Natural killer cell (primary cell): ENCODE measurements at regions of chr19 and their contacts with region 1.

Region 1: DNA sequence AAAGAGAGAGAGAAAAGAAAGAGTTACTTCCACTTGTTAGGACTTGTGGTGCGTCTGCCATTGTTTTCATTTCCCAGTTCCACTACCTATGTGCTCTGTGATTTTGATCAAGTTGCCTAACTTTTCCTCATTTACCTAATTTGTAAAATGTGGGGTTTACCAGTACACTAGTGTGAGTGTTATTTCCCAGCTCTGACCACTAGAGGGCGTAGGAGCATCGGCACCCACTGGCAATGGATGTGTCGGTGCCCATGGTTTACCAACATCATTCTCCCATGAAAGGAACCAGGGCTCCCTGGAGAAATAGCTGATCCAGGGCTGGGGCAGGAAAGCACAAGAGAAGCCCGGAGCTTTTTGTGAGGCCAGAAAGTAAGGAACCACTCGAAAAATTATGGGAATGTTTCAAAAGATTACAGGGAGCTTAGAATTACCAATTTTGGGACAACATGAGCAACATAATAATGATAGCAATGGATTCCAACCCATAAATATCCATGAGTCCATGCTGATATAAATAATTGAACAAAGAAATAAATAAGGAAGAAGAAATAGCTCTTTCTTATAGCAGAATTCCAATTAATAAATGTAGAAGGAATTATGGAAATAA is 15.1 kb upstream of the CEACAM4 start:
- DNase-seq: peak; percentile 54 to 87
- ATAC-seq: peak; percentile 85 to 91 (median 87)
- H3K4me3 ChIP-seq: no peak overlapping the region
- H3K4me3 Mint-ChIP-seq: no peak overlapping the region
- H3K27ac ChIP-seq: no peak overlapping the region
- H3K27ac Mint-ChIP-seq: no peak overlapping the region
- H3K4me1 ChIP-seq: no peaks in the 10 kb centered on the region
- H3K4me1 Mint-ChIP-seq: no peaks in the 10 kb centered on the region
- H3K27me3 ChIP-seq: no peaks in the 10 kb centered on the region
- H3K27me3 Mint-ChIP-seq: peaks cover 14 to 24% of the 10 kb centered on the region in 2 donors
- CTCF ChIP-seq: peak; percentile 96

Region 2: GRCh38 chr19:41691268-41691970 is 49.4 kb after region 1 on chr19:
- intact Hi-C with region 1: loop called (anchors 2 kb)
- DNase-seq: peak in 1 of 2 donors; percentile 61
- ATAC-seq: peak in 2 of 3 donors; percentile 57 to 63
- H3K4me3 ChIP-seq: no peak overlapping the region
- H3K4me3 Mint-ChIP-seq: no peak overlapping the region
- H3K27ac ChIP-seq: no peak overlapping the region
- H3K27ac Mint-ChIP-seq: no peak overlapping the region
- H3K4me1 ChIP-seq: no peaks in the 10 kb centered on the region
- H3K4me1 Mint-ChIP-seq: peaks cover 0 to 7% of the 10 kb centered on the region in 2 donors
- H3K27me3 ChIP-seq: no peaks in the 10 kb centered on the region
- H3K27me3 Mint-ChIP-seq: peaks cover 15 to 26% of the 10 kb centered on the region in 2 donors
- CTCF ChIP-seq: peak; percentile 62

Region 3: GRCh38 chr19:41734617-41735016 is 92.6 kb after region 1 on chr19:
- intact Hi-C with region 1: no loop called
- DNase-seq: no peak
- ATAC-seq: no peak
- H3K4me3 ChIP-seq: no peak overlapping the region
- H3K4me3 Mint-ChIP-seq: no peak overlapping the region
- H3K27ac ChIP-seq: no peak overlapping the region
- H3K27ac Mint-ChIP-seq: no peak overlapping the region
- H3K4me1 ChIP-seq: no peaks in the 10 kb centered on the region
- H3K4me1 Mint-ChIP-seq: no peaks in the 10 kb centered on the region
- H3K27me3 ChIP-seq: peaks cover 3% of the 10 kb centered on the region
- H3K27me3 Mint-ChIP-seq: peaks cover 25 to 36% of the 10 kb centered on the region in 2 donors
- CTCF ChIP-seq: no peak

Region 4: DNA sequence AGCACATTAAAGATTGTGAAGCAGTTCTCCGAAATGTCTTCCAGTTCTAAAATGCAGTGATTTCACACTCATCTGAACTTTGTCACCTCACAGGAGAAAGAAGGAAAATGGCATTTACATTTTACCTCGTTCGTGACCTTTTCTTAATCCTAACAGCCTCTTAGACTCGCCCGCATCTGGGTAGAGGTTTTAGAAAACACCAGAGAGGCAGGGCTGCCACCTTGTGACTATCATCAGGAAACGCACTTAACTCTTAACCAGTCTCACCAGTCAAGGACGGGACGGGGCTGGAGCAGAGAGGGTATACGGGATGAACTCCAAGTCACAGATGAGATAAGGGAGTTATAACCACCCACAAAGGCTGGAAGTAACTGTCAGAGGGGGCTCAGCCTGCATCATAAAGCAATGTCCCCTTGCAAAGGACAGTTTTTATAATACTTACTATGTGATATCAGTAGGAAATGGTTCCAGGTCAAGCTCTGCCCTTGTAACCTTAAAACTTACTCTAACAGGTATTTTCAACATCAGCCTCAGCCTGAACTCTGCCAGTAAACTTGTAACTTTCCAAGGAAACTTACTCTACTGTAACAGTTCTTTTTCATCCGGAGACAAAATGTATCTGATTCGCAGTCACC is 104.7 kb after region 1 on chr19:
- intact Hi-C with region 1: loop called (anchors 2 kb)
- DNase-seq: peak in 1 of 2 donors; percentile 69
- ATAC-seq: peak; percentile 66 to 84 (median 70)
- H3K4me3 ChIP-seq: no peak overlapping the region
- H3K4me3 Mint-ChIP-seq: no peak overlapping the region
- H3K27ac ChIP-seq: no peak overlapping the region
- H3K27ac Mint-ChIP-seq: no peak overlapping the region
- H3K4me1 ChIP-seq: no peaks in the 10 kb centered on the region
- H3K4me1 Mint-ChIP-seq: peaks cover 0 to 6% of the 10 kb centered on the region in 2 donors
- H3K27me3 ChIP-seq: no peaks in the 10 kb centered on the region
- H3K27me3 Mint-ChIP-seq: peaks cover 29 to 56% of the 10 kb centered on the region in 2 donors
- CTCF ChIP-seq: peak; percentile 26